PC-3 (cell line): ENCODE measurements at regions of chr14 and their contacts with region 1.

Region 1: GRCh38 chr14:34496679-34497513 is 34.9 kb upstream of the SPTSSA start:
- DNase-seq: peak; percentile 98
- ATAC-seq: peak; percentile 94
- H3K4me3 ChIP-seq: peak overlapping the region; percentile 20; the same call in 1 of the 2 replicates
- H3K27ac ChIP-seq: peak overlapping the region; percentile 94
- H3K4me1 ChIP-seq: peaks cover 26% of the 10 kb centered on the region
- H3K27me3 ChIP-seq: no peaks in the 10 kb centered on the region
- CTCF ChIP-seq: peak; percentile 70

Region 2: GRCh38 chr14:33839193-33840076 is 657.5 kb before region 1 on chr14:
- CTCF ChIA-PET with region 1: interaction called, 3 read pairs
- POLR2A ChIA-PET with region 1: no interaction called
- intact Hi-C with region 1: loop called (anchors 2 kb)
- DNase-seq: peak; percentile 69
- ATAC-seq: peak; percentile 83
- H3K4me3 ChIP-seq: no peak overlapping the region
- H3K27ac ChIP-seq: no peak overlapping the region
- H3K4me1 ChIP-seq: no peaks in the 10 kb centered on the region
- H3K27me3 ChIP-seq: peaks cover 17% of the 10 kb centered on the region; the same call in 1 of the 2 replicates
- CTCF ChIP-seq: peak; percentile 93

Region 3: DNA sequence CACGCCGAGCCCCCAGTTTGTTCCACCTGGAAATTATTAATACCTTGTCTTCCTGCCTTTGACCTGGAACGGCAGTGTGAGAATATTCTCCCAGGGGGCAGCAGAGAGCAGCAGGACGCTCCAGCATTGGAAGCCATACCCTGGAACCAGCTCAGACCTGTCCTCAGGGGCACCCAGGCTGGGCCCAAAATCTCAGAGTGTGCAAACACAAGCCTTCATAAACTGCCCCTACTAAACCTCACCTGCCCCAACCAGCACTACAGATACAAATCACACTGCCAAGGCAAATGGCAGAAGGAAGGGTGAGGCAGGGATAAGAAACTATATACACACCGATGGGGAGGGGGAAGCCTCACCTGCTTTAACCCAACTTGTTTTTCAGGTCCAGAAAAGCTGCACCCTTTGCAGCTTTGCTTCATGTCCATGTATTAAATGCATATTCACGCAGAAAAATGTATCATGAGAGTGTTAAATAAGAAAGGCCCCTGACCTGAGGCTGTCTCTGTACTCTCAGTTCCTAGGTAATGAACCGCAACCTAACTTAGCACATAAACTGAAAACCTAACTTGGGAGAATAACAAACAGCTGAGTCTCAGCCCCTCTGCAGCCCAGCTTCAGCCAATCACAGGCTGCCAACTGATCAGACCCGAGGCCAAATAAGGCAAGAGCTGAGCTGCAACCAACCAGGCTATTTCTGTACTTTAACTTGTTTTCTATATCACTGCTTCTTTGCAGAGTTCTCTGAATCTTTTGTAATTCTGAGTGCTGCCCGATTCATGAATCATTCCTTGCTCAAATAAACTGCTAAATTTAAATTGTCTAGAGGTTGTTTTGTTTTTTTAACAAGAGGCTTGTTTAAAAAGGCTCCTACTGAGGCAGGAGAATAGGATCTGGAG is 164.9 kb before region 1 on chr14:
- CTCF ChIA-PET with region 1: interaction called, 27 read pairs
- POLR2A ChIA-PET with region 1: interaction called, 3 read pairs
- intact Hi-C with region 1: loop called (anchors 1 kb)
- DNase-seq: peak; percentile 85
- ATAC-seq: peak; percentile 88
- H3K4me3 ChIP-seq: peak overlapping the region; percentile 20; the same call in 1 of the 2 replicates
- H3K27ac ChIP-seq: peak overlapping the region; percentile 66
- H3K4me1 ChIP-seq: peaks cover 21% of the 10 kb centered on the region
- H3K27me3 ChIP-seq: no peaks in the 10 kb centered on the region
- CTCF ChIP-seq: peak; percentile 94

Region 4: DNA sequence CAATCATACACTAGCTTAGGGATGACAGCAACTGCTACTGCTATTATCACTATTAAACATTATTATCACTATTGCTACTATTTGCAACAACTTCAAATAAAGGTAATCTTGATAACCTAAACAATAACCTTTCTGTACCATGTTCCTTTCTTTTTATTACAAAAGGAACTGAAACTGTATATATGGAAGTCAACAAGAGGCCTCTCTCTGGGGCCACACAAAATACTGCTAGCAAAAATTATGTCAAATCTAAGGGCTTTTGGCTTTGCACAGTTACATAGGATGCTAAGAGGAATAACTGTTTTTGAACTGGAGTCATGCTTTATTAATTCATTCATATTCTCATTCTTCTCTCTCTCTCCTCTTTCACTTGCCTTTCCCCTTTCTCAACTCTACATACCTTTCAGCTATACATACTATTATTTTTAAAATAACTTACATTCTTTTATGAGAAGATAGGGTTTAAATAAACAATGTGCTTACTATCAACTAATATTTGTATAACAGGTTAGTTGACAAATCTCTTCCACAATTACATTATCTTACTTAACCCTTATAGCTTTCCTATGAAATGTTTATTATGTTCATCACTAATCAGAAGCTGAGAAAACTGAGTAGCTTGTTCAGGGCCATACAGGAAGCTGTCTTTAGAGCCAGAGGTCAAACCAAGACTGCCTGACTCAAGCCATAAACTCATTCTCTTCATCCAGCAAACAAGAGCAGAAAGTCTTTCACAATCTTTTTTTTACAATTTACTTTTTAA is 60.6 kb before region 1 on chr14:
- CTCF ChIA-PET with region 1: interaction called, 6 read pairs
- POLR2A ChIA-PET with region 1: interaction called, 10 read pairs
- intact Hi-C with region 1: loop called (anchors 2 kb)
- DNase-seq: peak; percentile 79
- ATAC-seq: peak; percentile 87
- H3K4me3 ChIP-seq: no peak overlapping the region
- H3K27ac ChIP-seq: peak overlapping the region; percentile 52; the same call in 1 of the 2 replicates
- H3K4me1 ChIP-seq: peaks cover 42% of the 10 kb centered on the region
- H3K27me3 ChIP-seq: no peaks in the 10 kb centered on the region
- CTCF ChIP-seq: no peak

Region 5: GRCh38 chr14:34461334-34462131 is 35.4 kb before region 1 on chr14:
- CTCF ChIA-PET with region 1: interaction called, 5 read pairs
- POLR2A ChIA-PET with region 1: interaction called, 6 read pairs
- intact Hi-C with region 1: loop called (anchors 1 kb)
- DNase-seq: peak; percentile 56
- ATAC-seq: peak; percentile 53
- H3K4me3 ChIP-seq: peak overlapping the region; percentile 86
- H3K27ac ChIP-seq: no peak overlapping the region
- H3K4me1 ChIP-seq: peaks cover 21% of the 10 kb centered on the region
- H3K27me3 ChIP-seq: no peaks in the 10 kb centered on the region
- CTCF ChIP-seq: no peak